ENCODE measurements at regions of chr11 and their contacts with region 1.

Region 1: DNA sequence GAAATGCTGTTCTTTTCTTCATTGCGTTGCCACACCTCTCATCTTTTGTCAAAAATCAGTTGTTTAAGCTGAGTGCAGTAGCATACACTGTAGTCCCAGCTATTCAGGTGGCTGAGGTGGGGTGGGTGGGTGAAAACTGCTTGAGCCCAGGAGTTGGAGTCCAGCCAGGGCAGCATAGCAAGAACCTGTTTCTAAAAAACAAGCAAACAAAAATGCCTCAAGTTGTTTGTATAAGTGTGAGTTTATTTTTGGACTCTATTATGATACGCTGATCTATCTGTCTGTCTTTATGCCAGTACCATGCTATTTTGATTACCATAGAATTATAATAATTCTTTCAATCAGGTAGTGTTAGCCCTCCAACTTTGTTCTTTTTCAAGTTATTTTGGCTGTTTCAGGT is 62.5 kb upstream of the RRM1 start:
- DNase-seq: no peak
- ATAC-seq: no peak
- H3K4me3 ChIP-seq: no peak overlapping the region
- H3K27ac ChIP-seq: no peak overlapping the region
- H3K4me1 ChIP-seq: peaks cover 0 to 9% (median under 1%) of the 10 kb centered on the region in 9 donors
- H3K27me3 ChIP-seq: no peaks in the 10 kb centered on the region
- CTCF ChIP-seq: no peak

Region 2: GRCh38 chr11:4065601-4066377 is 33.7 kb after region 1 on chr11:
- intact Hi-C with region 1: loop called in 1 of 10 experiments (anchors 1 kb)
- DNase-seq: peak in 1 of 2 donors; percentile 48
- ATAC-seq: peak; percentile 69 to 90 (median 83)
- H3K4me3 ChIP-seq: no peak overlapping the region
- H3K27ac ChIP-seq: peak overlapping the region in 4 of 10 donors; percentile 15 to 48 (median 30)
- H3K4me1 ChIP-seq: peaks cover 3 to 46% (median 35%) of the 10 kb centered on the region in 9 donors
- H3K27me3 ChIP-seq: no peaks in the 10 kb centered on the region
- CTCF ChIP-seq: peak in 3 of 9 donors; percentile 10 to 21 (median 17)

Measured in heart right ventricle (tissue), 16 donors.